Heart right ventricle (tissue), 16 donors: ENCODE measurements at regions of chr15 and their contacts with region 1.

Region 1: DNA sequence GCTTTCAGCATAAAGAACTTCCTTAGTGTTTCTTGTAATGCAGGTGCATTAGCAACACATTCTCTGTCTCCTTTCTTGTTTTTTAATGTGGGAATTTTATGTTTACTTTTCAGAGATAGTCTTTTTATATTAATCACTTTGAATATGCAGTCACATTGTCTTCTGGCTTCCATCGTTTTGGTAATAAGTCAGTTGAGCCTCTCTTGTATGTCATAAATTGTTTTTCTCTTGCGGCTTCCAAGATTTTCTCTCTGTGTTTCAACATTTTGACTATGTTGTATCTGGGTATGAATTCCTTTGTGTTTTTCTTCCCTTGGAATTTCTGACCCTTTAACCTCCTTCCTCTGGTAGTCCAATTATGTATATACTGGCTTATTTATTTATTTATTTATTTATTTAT is 25.3 kb downstream of the GABRG3 start:
- DNase-seq: no peak
- ATAC-seq: no peak
- H3K4me3 ChIP-seq: no peak overlapping the region
- H3K27ac ChIP-seq: no peak overlapping the region
- H3K4me1 ChIP-seq: no peaks in the 10 kb centered on the region
- H3K27me3 ChIP-seq: no peaks in the 10 kb centered on the region
- CTCF ChIP-seq: no peak

Region 2: DNA sequence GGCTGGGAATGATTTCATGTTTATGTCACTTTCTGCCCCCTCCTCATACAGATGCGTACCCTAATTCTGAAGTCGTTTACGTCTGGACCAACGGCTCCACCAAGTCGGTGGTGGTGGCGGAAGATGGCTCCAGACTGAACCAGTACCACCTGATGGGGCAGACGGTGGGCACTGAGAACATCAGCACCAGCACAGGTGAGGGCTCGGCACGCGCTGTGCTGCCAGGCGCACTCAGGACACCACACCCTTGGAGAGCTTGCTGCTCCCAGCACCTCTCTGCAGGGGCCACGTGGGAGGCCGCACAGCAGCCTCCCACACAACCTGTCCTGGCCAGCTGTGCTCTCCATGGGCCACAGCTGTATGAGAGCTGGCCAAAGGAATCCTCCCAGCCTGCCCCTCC is 59.1 kb before region 1 on chr15:
- intact Hi-C with region 1: loop called in 1 of 10 experiments (anchors 10 kb)
- DNase-seq: no peak
- ATAC-seq: no peak
- H3K4me3 ChIP-seq: no peak overlapping the region
- H3K27ac ChIP-seq: no peak overlapping the region
- H3K4me1 ChIP-seq: no peaks in the 10 kb centered on the region
- H3K27me3 ChIP-seq: no peaks in the 10 kb centered on the region
- CTCF ChIP-seq: no peak